ENCODE measurements at regions of chr22 and their contacts with region 1.

Region 1: DNA sequence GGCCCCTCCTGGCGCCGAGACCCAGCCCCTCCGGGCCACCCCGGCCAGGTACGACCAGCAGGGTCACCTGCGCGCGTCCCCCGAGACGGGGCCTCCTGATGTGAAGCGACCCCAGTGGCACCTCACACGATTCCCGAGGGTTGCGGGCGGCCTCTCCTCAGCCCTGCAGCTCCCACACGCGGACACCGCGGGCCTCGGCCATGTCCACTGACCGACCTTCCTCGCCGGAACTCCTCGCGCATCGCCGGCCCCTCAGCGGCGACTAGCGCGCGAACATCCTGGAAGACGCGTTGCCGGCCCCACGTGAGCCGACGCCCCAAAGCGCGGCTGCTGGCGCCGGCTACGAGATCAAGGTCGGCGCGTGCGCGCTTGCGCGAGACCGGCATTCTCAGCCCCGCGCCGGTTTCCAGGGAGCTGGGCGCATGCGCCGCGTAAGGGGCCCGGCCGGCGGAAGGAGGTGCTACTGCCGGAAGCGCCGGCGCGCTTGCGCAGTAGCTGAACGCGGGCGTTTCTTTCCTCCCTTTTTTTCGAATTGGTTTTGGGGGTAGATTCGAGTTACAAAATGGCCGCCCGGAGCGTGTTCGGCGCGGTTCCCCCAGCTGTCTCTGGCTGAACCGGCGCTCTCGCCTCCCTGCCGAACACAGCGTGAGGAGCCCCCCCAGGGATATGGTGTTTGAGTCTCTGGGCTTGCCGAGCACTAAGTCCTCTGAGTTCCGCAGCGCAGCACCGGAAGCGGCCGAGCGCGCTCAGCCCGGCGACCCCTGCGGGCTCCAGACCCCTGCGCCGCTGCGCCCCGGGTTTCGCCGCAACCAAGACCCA is at the start of gene NUP50:
- DNase-seq: peak; percentile 93
- H3K4me3 ChIP-seq: peak within 1 kb of the TSS; percentile 69 to 81
- H3K27ac ChIP-seq: peak within 1 kb of the TSS; percentile 85
- H3K4me1 ChIP-seq: peaks cover 7% of the 10 kb centered on the region
- H3K27me3 ChIP-seq: no peaks in the 10 kb centered on the region
- CTCF ChIP-seq: peak in 1 of 4 experiments; percentile 30
- POLR2A ChIP-seq: peak; percentile 88
- total RNA-seq, gene NUP50: 51.4 to 101 TPM

Region 2: DNA sequence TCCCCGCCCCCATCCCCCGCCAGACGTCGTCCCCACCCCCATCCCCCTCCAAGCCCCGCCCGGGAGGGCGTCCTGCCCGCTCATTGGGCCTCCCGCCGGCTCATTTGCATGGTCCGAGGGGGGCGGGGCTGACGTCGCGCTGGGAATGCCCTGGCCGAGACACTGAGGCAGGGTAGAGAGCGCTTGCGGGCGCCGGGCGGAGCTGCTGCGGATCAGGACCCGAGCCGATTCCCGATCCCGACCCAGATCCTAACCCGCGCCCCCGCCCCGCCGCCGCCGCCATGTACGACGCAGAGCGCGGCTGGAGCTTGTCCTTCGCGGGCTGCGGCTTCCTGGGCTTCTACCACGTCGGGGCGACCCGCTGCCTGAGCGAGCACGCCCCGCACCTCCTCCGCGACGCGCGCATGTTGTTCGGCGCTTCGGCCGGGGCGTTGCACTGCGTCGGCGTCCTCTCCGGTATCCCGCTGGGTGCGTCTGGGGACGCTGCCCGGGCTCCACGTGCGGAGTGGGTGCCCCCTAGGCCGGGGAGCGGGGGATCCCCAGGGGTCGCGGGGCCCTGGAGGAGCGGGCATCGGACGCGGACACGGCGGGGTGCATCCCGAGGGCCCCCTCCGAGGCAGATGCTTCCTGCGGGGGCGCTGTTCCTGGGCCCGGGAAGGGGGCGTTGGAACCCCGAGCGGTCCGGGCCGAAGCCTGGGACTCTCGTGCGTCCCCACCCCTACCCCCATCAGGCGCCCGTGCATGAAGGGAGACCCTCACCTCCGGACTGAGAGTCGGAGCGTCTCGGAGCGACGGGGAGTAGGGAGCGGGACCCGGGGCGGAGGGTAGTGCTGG is 1239.8 kb before region 1 on chr22 and contains the start of gene PNPLA3:
- intact Hi-C with region 1: no loop called
- DNase-seq: peak; percentile 92
- H3K4me3 ChIP-seq: peak within 1 kb of the TSS; percentile 41 to 48
- H3K27ac ChIP-seq: peak within 1 kb of the TSS in 1 of 2 donors; percentile 20
- H3K4me1 ChIP-seq: no peaks in the 10 kb centered on the region
- H3K27me3 ChIP-seq: no peaks in the 10 kb centered on the region
- CTCF ChIP-seq: no peak
- POLR2A ChIP-seq: peak; percentile 68
- total RNA-seq, gene PNPLA3: 0.14 to 0.28 TPM

Region 3: DNA sequence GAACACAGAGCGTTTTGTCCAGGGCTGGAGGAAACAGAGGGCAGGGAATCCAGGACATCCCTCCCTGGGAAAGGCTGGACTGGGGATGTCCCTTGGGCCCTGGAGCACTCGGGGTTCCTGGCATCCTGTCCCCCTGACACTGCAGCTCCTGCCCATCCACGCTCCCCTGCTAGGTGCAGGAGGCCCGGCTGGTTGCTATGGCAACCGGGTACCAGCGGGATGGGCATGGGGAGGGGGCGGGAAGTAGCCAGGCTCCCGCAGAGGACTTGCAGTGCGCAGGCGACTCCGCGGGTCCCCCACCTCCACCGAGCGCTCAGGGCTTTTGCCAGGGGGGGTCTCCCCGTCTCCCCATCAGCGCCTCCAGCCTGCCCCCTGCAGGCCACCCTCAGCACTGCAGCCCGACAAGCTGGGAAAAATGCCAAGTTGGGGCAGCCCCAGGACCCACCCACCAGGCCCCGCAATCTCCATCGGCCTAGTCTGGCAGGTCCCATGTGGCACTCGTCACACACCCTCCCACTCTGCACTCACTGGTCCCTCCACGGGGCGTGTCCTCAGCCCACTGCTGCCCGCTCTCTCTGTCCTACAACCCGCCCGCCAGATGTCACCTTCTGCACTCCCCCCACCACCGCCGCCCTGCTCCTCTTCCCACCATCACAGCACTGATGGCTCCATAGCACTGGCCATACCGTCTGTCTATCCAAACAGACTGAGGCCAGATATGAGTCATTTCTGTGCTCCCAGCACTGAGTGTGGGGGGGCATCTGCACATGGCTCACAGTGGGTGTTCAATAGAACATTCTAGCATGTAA is 45.5 kb after region 1 on chr22:
- intact Hi-C with region 1: no loop called
- DNase-seq: no peak
- H3K4me3 ChIP-seq: no peak overlapping the region
- H3K27ac ChIP-seq: peak overlapping the region; percentile 9 to 31
- H3K4me1 ChIP-seq: no peaks in the 10 kb centered on the region
- H3K27me3 ChIP-seq: no peaks in the 10 kb centered on the region
- CTCF ChIP-seq: peak in 3 of 4 experiments; percentile 45 to 54 (median 48)
- POLR2A ChIP-seq: no peak

Region 4: DNA sequence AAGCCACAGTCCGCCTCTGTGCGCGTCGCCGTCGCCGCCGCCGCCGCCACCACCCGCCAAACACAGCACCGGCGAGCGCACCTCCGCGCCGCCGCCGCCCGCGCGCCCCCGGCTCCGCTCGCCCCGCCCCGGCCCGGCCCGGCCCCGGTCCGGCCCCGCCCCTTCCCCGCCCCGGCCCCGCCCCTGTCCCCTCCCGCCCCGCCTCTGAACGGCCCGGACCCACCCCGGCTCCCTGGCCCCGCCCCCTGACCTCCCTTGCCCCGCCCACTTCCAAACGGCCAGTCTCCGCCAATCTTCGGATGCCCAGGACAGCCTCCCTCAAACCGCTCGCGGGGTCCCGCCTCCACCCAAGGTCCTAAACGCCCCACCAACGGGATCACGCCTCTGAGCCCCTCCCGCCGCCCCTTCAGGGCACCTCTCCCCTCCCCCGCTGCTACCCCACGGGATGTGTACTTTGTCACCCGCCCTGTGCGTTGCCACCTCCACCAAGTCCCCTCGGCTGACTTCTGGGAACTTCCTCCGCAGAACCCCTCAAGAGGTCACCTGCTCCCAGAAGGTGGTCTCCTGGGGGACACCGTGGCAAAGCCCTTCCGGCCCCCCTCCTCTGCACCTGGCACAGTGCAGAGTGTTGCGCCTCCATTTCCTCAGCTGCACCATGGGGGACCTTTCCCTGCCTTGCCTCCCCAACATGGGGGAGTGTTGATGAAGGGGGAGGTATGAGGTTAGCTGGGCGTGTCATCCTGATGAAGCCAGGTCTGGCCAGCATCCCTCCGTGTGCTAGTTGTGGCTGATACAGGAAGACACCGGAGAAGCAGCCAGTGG is 77.4 kb after region 1 on chr22 and contains the start of gene KIAA0930:
- intact Hi-C with region 1: loop called (anchors 5 kb)
- DNase-seq: peak; percentile 66
- H3K4me3 ChIP-seq: peak within 1 kb of the TSS; percentile 57 to 59
- H3K27ac ChIP-seq: peak within 1 kb of the TSS; percentile 31 to 56
- H3K4me1 ChIP-seq: peaks cover 12% of the 10 kb centered on the region
- H3K27me3 ChIP-seq: no peaks in the 10 kb centered on the region
- CTCF ChIP-seq: no peak
- POLR2A ChIP-seq: no peak
- total RNA-seq, gene KIAA0930: 29.1 to 55.1 TPM

Measured in prostate gland (tissue), 2 donors.